ENCODE measurements at regions of chr16 and their contacts with region 1.

Region 1: DNA sequence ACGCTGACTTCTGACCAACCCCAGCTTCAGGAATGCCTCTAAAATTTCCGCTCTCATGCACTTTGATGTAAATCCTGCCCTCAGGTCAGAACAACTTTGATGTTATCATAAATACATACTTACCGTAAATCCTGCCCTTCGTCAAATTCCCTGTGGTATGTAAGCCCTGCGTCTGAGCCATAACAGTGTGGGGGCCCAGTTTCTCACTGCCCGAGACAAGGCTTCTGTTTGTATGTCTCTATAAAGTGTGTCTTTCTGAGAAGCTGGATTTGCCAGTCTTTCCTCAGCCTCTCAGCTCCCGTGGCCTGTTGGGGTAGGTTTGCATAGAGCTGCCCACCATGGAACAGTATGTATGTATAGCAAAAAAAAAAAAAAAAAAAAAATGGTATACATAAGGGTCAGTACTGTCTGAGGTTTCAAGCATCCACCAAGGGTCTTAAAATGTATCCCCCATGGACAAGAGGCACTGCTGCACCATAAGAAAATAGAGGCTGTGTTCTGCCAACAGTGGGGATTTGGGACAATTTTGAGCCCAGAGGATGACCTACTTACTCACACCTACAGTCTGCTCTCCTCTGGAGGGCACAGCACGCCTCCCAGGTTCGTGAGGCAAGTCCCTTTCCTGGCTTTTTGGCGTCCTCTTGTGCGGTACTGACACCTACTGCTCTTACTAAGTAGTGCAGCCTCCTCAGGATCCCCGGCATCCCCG is 17.5 kb downstream of the PRMT7 start:
- DNase-seq: peak; percentile 61
- ATAC-seq: peak; percentile 100
- H3K4me3 Mint-ChIP-seq: no peak overlapping the region
- H3K27ac Mint-ChIP-seq: no peak overlapping the region
- H3K4me1 Mint-ChIP-seq: peaks cover 14% of the 10 kb centered on the region
- H3K27me3 Mint-ChIP-seq: no peaks in the 10 kb centered on the region
- CTCF ChIP-seq: peak; percentile 99

Region 2: DNA sequence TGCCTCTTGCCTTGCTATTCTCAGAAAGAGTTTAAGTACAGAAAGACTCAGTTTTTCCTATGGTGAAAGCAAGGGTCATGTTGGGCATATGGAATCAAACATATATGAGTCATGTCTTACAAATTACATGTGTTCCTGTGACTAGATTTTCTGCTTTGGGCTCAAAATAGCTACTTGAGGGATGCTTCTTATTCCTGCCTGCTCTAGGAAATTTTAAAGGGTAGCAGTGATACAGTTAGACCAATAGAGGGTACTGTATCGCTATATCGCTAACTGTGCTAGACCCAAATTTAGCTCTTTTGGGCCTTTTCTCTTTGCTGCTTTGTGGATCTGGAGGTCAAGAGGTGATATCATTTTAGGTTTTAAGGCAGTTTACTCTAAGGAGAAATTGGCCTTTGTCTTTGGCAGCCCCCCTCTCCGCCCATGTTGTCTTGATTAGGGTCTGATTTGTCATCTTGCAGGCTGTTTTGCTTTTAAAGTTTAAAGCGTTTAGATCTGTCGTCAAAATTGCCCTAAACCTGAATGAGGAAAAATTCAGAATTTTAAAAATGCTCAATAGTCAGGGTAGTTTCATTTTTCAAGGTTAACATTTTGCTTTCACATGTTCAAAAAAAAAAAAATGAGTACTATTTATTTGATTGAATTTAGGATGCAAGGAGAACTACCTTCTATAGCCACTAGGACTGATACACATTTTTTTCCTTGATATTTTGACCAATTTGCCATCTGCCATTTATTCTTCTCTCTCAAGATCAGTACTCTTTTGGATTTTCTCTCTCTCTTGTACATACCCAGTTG is 234.3 kb before region 1 on chr16:
- CTCF ChIA-PET with region 1: interaction called, 3 read pairs
- POLR2A ChIA-PET with region 1: no interaction called
- intact Hi-C with region 1: loop called (anchors 1 kb)
- DNase-seq: no peak
- ATAC-seq: peak; percentile 67
- H3K4me3 Mint-ChIP-seq: peak overlapping the region; percentile 6
- H3K27ac Mint-ChIP-seq: peak overlapping the region; percentile 65
- H3K4me1 Mint-ChIP-seq: peaks cover 87% of the 10 kb centered on the region
- H3K27me3 Mint-ChIP-seq: no peaks in the 10 kb centered on the region
- CTCF ChIP-seq: no peak

Measured in activated B cell treated with CpG ODN at 0.5 μM for 24 hours (primary cell).